Gastrocnemius medialis (tissue), 4 donors: ENCODE measurements at regions of chr7 and their contacts with region 1.

Region 1: DNA sequence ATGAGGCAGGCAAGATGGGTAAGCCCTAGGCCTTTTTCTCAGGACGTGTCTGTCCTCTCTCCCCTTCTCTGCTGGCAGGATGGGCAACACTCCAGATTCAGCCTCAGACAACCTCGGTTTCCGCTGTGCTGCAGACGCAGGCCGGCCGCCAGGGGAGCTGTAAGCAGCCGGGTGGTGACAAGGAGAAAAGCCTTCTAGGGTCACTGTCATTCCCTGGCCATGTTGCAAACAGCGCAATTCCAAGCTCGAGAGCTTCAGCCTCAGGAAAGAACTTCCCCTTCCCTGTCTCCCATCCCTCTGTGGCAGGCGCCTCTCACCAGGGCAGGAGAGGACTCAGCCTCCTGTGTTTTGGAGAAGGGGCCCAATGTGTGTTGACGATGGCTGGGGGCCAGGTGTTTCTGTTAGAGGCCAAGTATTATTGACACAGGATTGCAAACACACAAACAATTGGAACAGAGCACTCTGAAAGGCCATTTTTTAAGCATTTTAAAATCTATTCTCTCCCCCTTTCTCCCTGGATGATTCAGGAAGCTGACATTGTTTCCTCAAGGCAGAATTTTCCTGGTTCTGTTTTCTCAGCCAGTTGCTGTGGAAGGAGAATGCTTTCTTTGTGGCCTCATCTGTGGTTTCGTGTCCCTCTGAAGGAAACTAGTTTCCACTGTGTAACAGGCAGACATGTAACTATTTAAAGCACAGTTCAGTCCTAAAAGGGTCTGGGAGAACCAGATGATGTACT is 13.1 kb downstream of the PHKG1 start:
- DNase-seq: peak; percentile 91 to 96
- ATAC-seq: peak; percentile 65 to 75
- H3K4me3 ChIP-seq: no peak overlapping the region
- H3K27ac ChIP-seq: peak overlapping the region; percentile 94 to 99 (median 95)
- H3K4me1 ChIP-seq: peaks cover 62 to 72% of the 10 kb centered on the region in 2 donors
- H3K27me3 ChIP-seq: no peaks in the 10 kb centered on the region
- CTCF ChIP-seq: peak; percentile 86 to 90 (median 90)
- POLR2A ChIP-seq: no peak

Region 2: GRCh38 chr7:55415173-55415778 is 664.3 kb before region 1 on chr7:
- in situ Hi-C with region 1: no loop called
- intact Hi-C with region 1: no loop called
- DNase-seq: peak; percentile 53 to 64
- ATAC-seq: peak in 1 of 2 donors; percentile 73
- H3K4me3 ChIP-seq: no peak overlapping the region
- H3K27ac ChIP-seq: no peak overlapping the region
- H3K4me1 ChIP-seq: no peaks in the 10 kb centered on the region
- H3K27me3 ChIP-seq: no peaks in the 10 kb centered on the region
- CTCF ChIP-seq: peak; percentile 66 to 88 (median 78)
- POLR2A ChIP-seq: no peak

Region 3: DNA sequence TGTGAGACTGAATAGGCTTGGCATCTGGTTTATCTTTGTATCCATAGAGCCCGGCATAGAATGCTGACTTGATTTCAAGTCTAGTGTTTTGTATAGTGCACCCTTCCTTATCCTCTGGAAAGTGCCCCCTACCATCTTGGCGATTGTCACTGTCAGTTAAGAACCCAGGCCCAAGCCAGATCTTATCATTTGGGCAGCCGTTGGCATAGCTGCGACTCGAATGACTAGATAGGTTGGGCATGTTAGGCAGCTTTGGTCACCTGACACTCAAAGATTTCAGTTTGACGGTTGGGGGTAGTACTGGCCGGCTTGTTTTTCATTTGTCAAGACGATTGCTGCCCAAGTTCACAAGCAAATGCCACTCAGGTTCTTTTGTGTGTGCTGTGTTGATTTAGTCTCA is 108.6 kb before region 1 on chr7:
- in situ Hi-C with region 1: loop called in 2 of 4 experiments (anchors 10 to 25 kb)
- intact Hi-C with region 1: loop called (anchors 2 kb)
- DNase-seq: peak; percentile 62 to 83
- ATAC-seq: peak; percentile 65 to 72
- H3K4me3 ChIP-seq: peak overlapping the region; percentile 21 to 40 (median 34)
- H3K27ac ChIP-seq: peak overlapping the region; percentile 96 to 98 (median 97)
- H3K4me1 ChIP-seq: peaks cover 72 to 91% of the 10 kb centered on the region in 2 donors
- H3K27me3 ChIP-seq: no peaks in the 10 kb centered on the region
- CTCF ChIP-seq: no peak
- POLR2A ChIP-seq: peak; percentile 53 to 73

Region 4: DNA sequence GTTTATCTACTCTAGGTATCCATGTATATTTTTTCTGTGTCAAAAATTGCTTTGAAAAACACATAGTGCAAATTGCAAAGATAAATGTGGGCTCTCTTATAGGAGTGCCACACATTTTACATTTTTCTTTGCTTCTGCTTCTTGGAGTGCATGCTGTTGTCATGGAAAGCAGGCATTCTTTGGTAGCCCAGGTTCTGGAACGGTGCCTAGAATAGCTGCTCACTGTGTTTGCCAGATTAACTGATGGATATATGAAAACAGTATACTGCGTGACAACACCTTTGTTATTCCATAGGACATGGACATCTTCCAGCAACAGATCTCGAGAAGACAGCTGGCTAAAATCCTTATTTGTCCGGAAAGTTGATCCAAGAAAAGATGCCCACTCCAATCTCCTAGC is 101.8 kb before region 1 on chr7:
- in situ Hi-C with region 1: loop called in 2 of 4 experiments (anchors 10 to 25 kb)
- intact Hi-C with region 1: no loop called
- DNase-seq: no peak
- ATAC-seq: no peak
- H3K4me3 ChIP-seq: no peak overlapping the region
- H3K27ac ChIP-seq: peak overlapping the region; percentile 96 to 98 (median 97)
- H3K4me1 ChIP-seq: peaks cover 34 to 48% of the 10 kb centered on the region in 2 donors
- H3K27me3 ChIP-seq: no peaks in the 10 kb centered on the region
- CTCF ChIP-seq: no peak
- POLR2A ChIP-seq: no peak

Region 5: GRCh38 chr7:56092789-56093531 is 13.3 kb after region 1 on chr7 and contains the start of gene PHKG1:
- in situ Hi-C with region 1: no loop called
- intact Hi-C with region 1: loop called (anchors 1 kb)
- DNase-seq: peak; percentile 84 to 93
- ATAC-seq: peak; percentile 76 to 78
- H3K4me3 ChIP-seq: peak within 1 kb of the TSS; percentile 52 to 64 (median 58)
- H3K27ac ChIP-seq: peak within 1 kb of the TSS; percentile 94 to 99 (median 95)
- H3K4me1 ChIP-seq: peaks cover 48 to 51% of the 10 kb centered on the region in 2 donors
- H3K27me3 ChIP-seq: no peaks in the 10 kb centered on the region
- CTCF ChIP-seq: peak in 4 of 5 experiments; percentile 46 to 82 (median 62)
- POLR2A ChIP-seq: peak; percentile 59 to 84
- total RNA-seq, gene PHKG1: 30.1 to 211 (median 57.2) TPM

Region 6: GRCh38 chr7:56238441-56238840 is 158.8 kb after region 1 on chr7:
- in situ Hi-C with region 1: no loop called
- intact Hi-C with region 1: no loop called
- DNase-seq: no peak
- ATAC-seq: no peak
- H3K4me3 ChIP-seq: no peak overlapping the region
- H3K27ac ChIP-seq: no peak overlapping the region
- H3K4me1 ChIP-seq: no peaks in the 10 kb centered on the region
- H3K27me3 ChIP-seq: no peaks in the 10 kb centered on the region
- CTCF ChIP-seq: no peak
- POLR2A ChIP-seq: no peak